ENCODE measurements at regions of chr10 and their contacts with region 1.

Region 1: DNA sequence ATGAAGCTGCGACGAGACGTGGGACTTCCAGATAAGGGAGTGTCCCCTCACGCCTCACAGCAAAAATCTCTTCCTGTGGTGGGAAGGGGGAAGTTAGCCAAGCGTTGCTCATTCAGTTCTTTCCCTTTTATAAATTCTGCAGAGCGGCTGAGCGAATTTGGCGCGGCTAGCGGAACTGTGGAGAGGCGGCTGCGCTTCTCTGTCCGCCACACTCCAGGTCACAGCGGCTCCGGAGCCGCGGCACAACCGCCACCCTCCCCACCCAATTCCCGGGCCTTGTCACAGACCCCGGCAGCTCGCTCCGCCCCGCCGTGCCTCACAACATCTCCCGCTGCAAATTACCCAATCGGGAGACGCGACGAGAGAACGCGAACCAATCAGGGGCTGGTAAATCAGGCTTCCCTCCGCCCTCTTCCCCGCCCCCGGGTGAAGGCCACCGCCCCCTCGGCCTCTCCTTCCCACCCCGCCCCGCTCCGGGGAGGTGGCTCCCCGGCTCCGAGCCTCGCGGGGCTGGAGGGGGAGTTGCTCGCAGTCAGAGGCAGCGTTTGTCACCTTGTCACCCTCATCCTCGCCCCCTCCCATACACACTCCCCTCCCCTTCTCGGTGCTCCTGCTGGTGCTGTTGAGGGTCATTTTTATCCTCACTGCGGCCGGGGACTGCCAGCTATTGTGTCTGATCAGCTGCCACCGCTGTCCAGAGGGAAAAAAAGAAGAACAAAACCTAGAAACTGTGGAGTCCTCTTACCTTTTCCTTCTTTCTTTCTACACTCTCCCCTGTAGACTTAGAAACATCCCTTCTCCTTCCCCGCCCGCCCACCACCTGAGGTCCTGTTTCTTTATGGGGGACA is 918 bp upstream of the ARHGAP21 start:
- DNase-seq: peak; percentile 96
- H3K4me3 ChIP-seq: peak overlapping the region; percentile 66 to 82 (median 70)
- H3K27ac ChIP-seq: peak overlapping the region; percentile 86
- H3K4me1 ChIP-seq: peaks cover 5% of the 10 kb centered on the region
- H3K27me3 ChIP-seq: no peaks in the 10 kb centered on the region
- CTCF ChIP-seq: no peak

Region 2: DNA sequence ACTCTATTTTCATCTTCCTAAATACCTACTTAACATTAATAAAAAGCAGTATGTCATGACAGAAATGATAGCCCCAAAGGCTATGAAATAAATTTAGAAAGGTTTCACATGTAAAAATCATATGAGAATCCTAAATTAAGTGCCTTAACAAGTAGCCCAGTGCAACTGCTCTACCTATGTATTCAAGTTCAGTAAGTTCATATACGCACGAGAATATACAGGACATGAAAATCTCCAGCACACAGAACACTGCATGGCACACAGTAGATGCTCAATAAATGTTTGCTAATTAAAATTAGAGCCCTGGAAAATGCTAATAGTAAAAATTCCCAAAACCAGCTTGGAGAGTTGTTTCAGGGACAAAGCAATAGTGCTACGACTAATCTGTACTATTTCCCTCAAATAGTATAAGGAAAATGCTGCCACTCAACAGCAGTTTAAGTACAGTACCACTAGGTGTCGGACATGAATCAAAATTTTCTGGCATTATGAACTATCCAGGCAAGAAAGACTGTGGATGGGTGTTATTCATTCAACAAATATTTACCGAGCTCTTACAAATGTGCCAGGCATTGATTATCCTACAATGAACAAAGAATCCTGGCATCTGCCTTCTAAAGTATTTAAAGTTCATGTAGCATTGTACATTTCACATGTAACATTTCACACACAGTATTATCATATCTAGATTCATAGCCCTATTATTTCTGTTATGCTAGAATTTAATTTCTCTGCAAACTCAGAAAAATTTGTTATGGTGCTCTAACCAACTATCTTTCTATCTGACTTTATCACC is 81.8 kb before region 1 on chr10:
- CTCF ChIA-PET with region 1: no interaction called
- dilution Hi-C with region 1: no loop called
- in situ Hi-C with region 1: no loop called
- intact Hi-C with region 1: loop called (anchors 1 kb)
- DNase-seq: peak; percentile 73
- H3K4me3 ChIP-seq: no peak overlapping the region
- H3K27ac ChIP-seq: no peak overlapping the region
- H3K4me1 ChIP-seq: peaks cover 10% of the 10 kb centered on the region
- H3K27me3 ChIP-seq: no peaks in the 10 kb centered on the region
- CTCF ChIP-seq: peak; percentile 76 to 81

Region 3: GRCh38 chr10:24826019-24826418 is 101.4 kb after region 1 on chr10:
- CTCF ChIA-PET with region 1: interaction called, 5 read pairs
- dilution Hi-C with region 1: loop called (anchors 5 kb)
- in situ Hi-C with region 1: loop called in 1 of 2 experiments (anchors 5 kb)
- intact Hi-C with region 1: loop called (anchors 2 kb)
- DNase-seq: peak; percentile 75
- H3K4me3 ChIP-seq: peak overlapping the region in 2 of 3 experiments; percentile 6 to 12
- H3K27ac ChIP-seq: peak overlapping the region; percentile 46
- H3K4me1 ChIP-seq: peaks cover 36% of the 10 kb centered on the region
- H3K27me3 ChIP-seq: no peaks in the 10 kb centered on the region
- CTCF ChIP-seq: no peak

Region 4: GRCh38 chr10:24901686-24902399 is 177.2 kb after region 1 on chr10:
- CTCF ChIA-PET with region 1: no interaction called
- dilution Hi-C with region 1: no loop called
- in situ Hi-C with region 1: no loop called
- intact Hi-C with region 1: loop called (anchors 5 kb)
- DNase-seq: peak; percentile 93
- H3K4me3 ChIP-seq: no peak overlapping the region
- H3K27ac ChIP-seq: peak overlapping the region; percentile 39
- H3K4me1 ChIP-seq: peaks cover 26% of the 10 kb centered on the region
- H3K27me3 ChIP-seq: no peaks in the 10 kb centered on the region
- CTCF ChIP-seq: no peak

Region 5: DNA sequence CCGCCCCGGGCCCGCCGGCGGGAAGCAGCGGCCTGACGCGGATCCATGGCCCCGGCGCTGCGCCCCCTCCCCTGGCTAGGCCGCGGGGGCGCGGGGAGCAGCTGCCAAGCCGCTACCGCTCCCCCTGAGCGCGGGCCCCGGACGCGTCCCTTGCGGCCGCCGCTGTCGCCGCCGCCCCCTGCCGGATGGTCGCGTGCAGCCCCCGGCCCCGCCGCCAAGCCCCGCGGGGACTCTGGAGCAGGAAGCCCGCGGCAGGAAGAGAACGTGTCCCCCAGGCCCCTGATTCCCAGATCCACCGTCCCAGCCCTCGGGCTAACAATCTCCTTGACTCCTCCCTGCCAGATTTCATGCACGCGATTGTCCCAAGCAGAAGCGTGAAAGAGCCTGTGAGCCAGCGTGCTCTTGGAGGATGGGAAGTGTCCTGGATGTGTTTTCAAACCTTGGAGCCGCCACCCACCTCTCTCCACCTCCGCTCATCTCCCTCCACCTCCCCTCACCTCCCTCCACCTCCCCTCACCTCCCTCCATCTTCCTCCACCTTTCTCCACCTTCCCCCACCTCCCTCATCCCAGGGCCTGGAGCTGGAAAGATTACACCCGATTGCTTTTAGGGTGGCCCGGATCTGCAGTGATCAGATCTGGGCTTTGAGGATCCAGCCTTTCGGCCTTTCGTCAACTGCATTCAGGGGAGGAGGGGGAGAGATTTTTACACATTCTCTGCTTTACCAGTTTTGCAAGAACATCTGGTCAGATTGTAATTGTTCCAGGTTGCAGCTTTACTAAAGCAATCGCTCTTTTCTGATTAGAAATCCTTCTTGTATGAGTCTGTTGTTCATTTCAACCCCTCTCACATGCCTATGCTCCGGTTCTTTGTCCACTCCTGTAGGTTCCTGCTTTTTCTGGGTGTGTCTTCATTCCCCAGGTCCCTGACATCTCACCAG is 228.4 kb after region 1 on chr10:
- CTCF ChIA-PET with region 1: no interaction called
- dilution Hi-C with region 1: no loop called
- in situ Hi-C with region 1: loop called in 1 of 2 experiments (anchors 25 kb)
- intact Hi-C with region 1: no loop called
- DNase-seq: no peak
- H3K4me3 ChIP-seq: peak overlapping the region in 2 of 3 experiments; percentile 37 to 54
- H3K27ac ChIP-seq: peak overlapping the region; percentile 25
- H3K4me1 ChIP-seq: peaks cover 24% of the 10 kb centered on the region
- H3K27me3 ChIP-seq: no peaks in the 10 kb centered on the region
- CTCF ChIP-seq: no peak

Region 6: GRCh38 chr10:25016376-25017154 is 292.0 kb after region 1 on chr10 and contains the start of gene THNSL1:
- CTCF ChIA-PET with region 1: no interaction called
- dilution Hi-C with region 1: no loop called
- in situ Hi-C with region 1: no loop called
- intact Hi-C with region 1: loop called (anchors 1 kb)
- DNase-seq: peak; percentile 99
- H3K4me3 ChIP-seq: peak within 1 kb of the TSS; percentile 50 to 71 (median 66)
- H3K27ac ChIP-seq: peak within 1 kb of the TSS; percentile 99
- H3K4me1 ChIP-seq: peaks cover 10% of the 10 kb centered on the region
- H3K27me3 ChIP-seq: no peaks in the 10 kb centered on the region
- CTCF ChIP-seq: no peak
- total RNA-seq, gene THNSL1: 2.3 to 3.4 TPM

Region 7: GRCh38 chr10:25080880-25081581 is 356.4 kb after region 1 on chr10:
- CTCF ChIA-PET with region 1: no interaction called
- dilution Hi-C with region 1: no loop called
- in situ Hi-C with region 1: no loop called
- intact Hi-C with region 1: loop called (anchors 1 kb)
- DNase-seq: peak; percentile 72
- H3K4me3 ChIP-seq: no peak overlapping the region
- H3K27ac ChIP-seq: no peak overlapping the region
- H3K4me1 ChIP-seq: no peaks in the 10 kb centered on the region
- H3K27me3 ChIP-seq: no peaks in the 10 kb centered on the region
- CTCF ChIP-seq: peak; percentile 87 to 95